Transverse colon (tissue), 4 donors: ENCODE measurements at regions of chr14 and their contacts with region 1.

Region 1: GRCh38 chr14:76956316-76957090 is 72.0 kb downstream of the IRF2BPL start:
- DNase-seq: peak; percentile 92
- H3K4me3 ChIP-seq: peak overlapping the region; percentile 21 to 51 (median 38)
- H3K27ac ChIP-seq: peak overlapping the region; percentile 89 to 98 (median 94)
- H3K4me1 ChIP-seq: peaks cover 32 to 68% (median 55%) of the 10 kb centered on the region in 4 donors
- H3K27me3 ChIP-seq: no peaks in the 10 kb centered on the region
- CTCF ChIP-seq: peak in 3 of 5 experiments; percentile 16 to 55 (median 36)
- EP300 ChIP-seq: peak; percentile 2
- POLR2A ChIP-seq: peak; percentile 59

Region 2: GRCh38 chr14:75725481-75725880 is 1231.0 kb before region 1 on chr14:
- in situ Hi-C with region 1: no loop called
- intact Hi-C with region 1: no loop called
- DNase-seq: no peak
- H3K4me3 ChIP-seq: no peak overlapping the region
- H3K27ac ChIP-seq: peak overlapping the region in 2 of 4 donors; percentile 4 to 8
- H3K4me1 ChIP-seq: peaks cover 0 to 10% (median under 1%) of the 10 kb centered on the region in 4 donors
- H3K27me3 ChIP-seq: no peaks in the 10 kb centered on the region
- CTCF ChIP-seq: no peak
- EP300 ChIP-seq: no peak
- POLR2A ChIP-seq: no peak

Region 3: GRCh38 chr14:76918751-76919543 is 37.6 kb before region 1 on chr14:
- in situ Hi-C with region 1: no loop called
- intact Hi-C with region 1: loop called (anchors 2 kb)
- DNase-seq: peak; percentile 89
- H3K4me3 ChIP-seq: no peak overlapping the region
- H3K27ac ChIP-seq: peak overlapping the region; percentile 84 to 98 (median 88)
- H3K4me1 ChIP-seq: peaks cover 37 to 59% (median 46%) of the 10 kb centered on the region in 4 donors
- H3K27me3 ChIP-seq: no peaks in the 10 kb centered on the region
- CTCF ChIP-seq: peak in 2 of 5 experiments; percentile 4 to 32
- EP300 ChIP-seq: peak; percentile 39
- POLR2A ChIP-seq: peak; percentile 9

Region 4: GRCh38 chr14:77000340-77001270 is 44.1 kb after region 1 on chr14:
- in situ Hi-C with region 1: loop called in 1 of 4 experiments (anchors 10 kb)
- intact Hi-C with region 1: no loop called
- DNase-seq: no peak
- H3K4me3 ChIP-seq: peak overlapping the region in 2 of 4 donors; percentile 5 to 20
- H3K27ac ChIP-seq: peak overlapping the region; percentile 2 to 58 (median 44)
- H3K4me1 ChIP-seq: peaks cover 8 to 34% (median 16%) of the 10 kb centered on the region in 4 donors
- H3K27me3 ChIP-seq: no peaks in the 10 kb centered on the region
- CTCF ChIP-seq: no peak
- EP300 ChIP-seq: no peak
- POLR2A ChIP-seq: no peak

Region 5: GRCh38 chr14:77023001-77023996 is 66.8 kb after region 1 on chr14:
- in situ Hi-C with region 1: no loop called
- intact Hi-C with region 1: loop called (anchors 5 kb)
- DNase-seq: peak; percentile 63
- H3K4me3 ChIP-seq: peak overlapping the region in 2 of 4 donors; percentile 18 to 20
- H3K27ac ChIP-seq: peak overlapping the region; percentile 99 to 100 (median 100)
- H3K4me1 ChIP-seq: peaks cover 30 to 54% (median 48%) of the 10 kb centered on the region in 4 donors
- H3K27me3 ChIP-seq: no peaks in the 10 kb centered on the region
- CTCF ChIP-seq: peak; percentile 26 to 63 (median 28)
- EP300 ChIP-seq: no peak
- POLR2A ChIP-seq: peak; percentile 43

Region 6: GRCh38 chr14:77040059-77040740 is 83.7 kb after region 1 on chr14:
- in situ Hi-C with region 1: no loop called
- intact Hi-C with region 1: loop called (anchors 5 kb)
- DNase-seq: peak; percentile 99
- H3K4me3 ChIP-seq: peak overlapping the region; percentile 14 to 40 (median 19)
- H3K27ac ChIP-seq: peak overlapping the region; percentile 99 to 100 (median 100)
- H3K4me1 ChIP-seq: peaks cover 65 to 90% (median 80%) of the 10 kb centered on the region in 4 donors
- H3K27me3 ChIP-seq: no peaks in the 10 kb centered on the region
- CTCF ChIP-seq: no peak
- EP300 ChIP-seq: peak; percentile 69
- POLR2A ChIP-seq: peak; percentile 28